Dorsolateral prefrontal cortex (tissue), 120 donors: ENCODE measurements at regions of chr20 and their contacts with region 1.

Region 1: DNA sequence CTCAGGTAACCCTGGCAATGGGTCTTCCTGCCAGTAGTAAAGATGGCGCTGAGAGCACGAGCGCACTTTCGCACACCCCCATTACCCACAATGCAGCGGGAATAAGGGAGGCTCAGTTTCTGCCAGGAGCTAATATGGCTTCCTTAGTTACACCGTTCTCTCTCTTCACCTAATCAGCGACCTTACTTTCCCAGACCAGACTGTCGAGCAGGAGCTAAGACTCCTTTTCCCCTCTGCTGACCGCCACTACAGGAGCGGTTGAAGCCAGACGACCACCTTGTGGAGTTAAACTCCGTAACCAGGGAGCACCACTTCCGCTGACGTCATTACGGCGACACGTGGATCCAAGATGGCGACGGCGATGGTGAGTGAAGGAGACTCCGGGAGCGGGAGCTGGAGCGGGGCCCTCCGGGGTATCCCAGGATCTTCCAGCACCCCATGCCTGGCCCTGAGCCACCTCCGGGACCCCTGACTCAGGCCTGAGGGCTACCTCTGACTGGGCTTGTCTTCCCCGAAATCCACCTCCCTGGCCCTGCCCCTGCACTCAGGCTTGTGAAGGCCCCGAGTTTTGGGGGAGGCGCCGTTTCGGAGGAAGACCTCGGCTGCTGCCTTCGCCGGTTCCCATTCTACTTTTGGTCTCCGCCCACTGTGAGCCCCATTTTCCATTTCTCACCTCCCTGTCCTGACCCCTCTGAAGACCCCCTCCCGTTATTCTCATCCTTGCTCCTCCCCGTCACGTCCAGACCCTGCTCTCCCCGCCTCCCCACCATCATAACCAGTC is at the start of gene TM9SF4:
- DNase-seq: peak; percentile 89 to 95 (median 92)
- H3K4me3 ChIP-seq: peak within 1 kb of the TSS; percentile 63 to 100 (median 95)
- H3K27ac ChIP-seq: peak within 1 kb of the TSS; percentile 84 to 100 (median 99)
- H3K27me3 ChIP-seq: no peaks in the 10 kb centered on the region
- CTCF ChIP-seq: peak in 30 of 56 donors; percentile 1 to 55 (median 23)
- total RNA-seq, gene TM9SF4: 45.6 to 73.7 (median 60.7) TPM

Region 2: DNA sequence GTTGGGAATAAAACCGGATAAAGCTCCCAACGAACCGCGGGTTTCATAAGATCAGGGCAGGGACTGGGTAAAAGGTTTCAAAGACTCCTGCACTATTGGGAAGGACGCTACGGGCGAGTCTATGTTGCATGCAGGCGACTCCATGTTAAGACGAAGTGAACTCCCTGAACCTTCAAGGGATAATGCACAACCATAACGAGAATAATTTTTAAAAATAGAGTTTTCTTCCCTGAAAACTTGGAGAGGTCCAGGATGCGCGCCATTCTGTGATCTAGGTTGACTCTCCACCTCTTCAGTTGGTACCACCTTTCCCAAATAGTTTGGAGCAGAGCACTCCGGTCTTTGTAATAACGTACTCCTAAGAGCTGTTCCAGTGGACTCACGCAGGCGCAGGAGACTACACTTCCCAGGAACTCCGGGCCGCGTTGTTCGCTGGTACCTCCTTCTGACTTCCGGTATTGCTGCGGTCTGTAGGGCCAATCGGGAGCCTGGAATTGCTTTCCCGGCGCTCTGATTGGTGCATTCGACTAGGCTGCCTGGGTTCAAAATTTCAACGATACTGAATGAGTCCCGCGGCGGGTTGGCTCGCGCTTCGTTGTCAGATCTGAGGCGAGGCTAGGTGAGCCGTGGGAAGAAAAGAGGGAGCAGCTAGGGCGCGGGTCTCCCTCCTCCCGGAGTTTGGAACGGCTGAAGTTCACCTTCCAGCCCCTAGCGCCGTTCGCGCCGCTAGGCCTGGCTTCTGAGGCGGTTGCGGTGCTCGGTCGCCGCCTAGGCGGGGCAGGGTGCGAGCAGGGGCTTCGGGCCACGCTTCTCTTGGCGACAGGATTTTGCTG is 370.6 kb before region 1 on chr20 and contains the start of gene TPX2:
- intact Hi-C with region 1: no loop called
- DNase-seq: peak; percentile 95 to 98 (median 97)
- H3K4me3 ChIP-seq: peak within 1 kb of the TSS; percentile 56 to 94 (median 81)
- H3K27ac ChIP-seq: peak within 1 kb of the TSS in 52 of 59 donors; percentile 11 to 87 (median 66)
- H3K27me3 ChIP-seq: no peaks in the 10 kb centered on the region
- CTCF ChIP-seq: peak in 33 of 56 donors; percentile 5 to 52 (median 27)
- total RNA-seq, gene TPX2: 1.1 to 4.1 (median 2.6) TPM

Region 3: DNA sequence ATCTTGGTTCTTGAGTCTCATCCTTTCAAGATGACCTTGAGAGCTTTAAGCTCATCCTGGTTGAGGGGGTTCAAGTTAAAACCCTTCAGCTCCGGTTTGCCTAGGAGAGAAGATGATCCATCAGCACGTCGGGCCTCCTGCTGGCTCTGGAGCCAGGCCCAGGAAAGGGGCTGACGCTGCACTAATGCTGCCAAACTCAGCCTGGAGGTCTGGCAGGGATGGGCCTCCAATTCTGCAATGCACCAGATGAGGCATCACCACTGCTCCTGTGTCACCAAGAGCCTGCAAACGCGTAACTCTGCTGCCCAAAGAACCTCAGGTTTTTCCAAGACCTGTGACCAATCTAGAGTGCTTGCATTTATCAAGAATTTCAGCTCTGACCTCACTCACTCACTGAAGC is 163.8 kb before region 1 on chr20:
- intact Hi-C with region 1: loop called in 1 of 2 experiments (anchors 5 kb)
- DNase-seq: peak in 5 of 10 donors; percentile 19 to 59 (median 46)
- H3K4me3 ChIP-seq: no peak overlapping the region
- H3K27ac ChIP-seq: peak overlapping the region in 16 of 59 donors; percentile 10 to 65 (median 32)
- H3K27me3 ChIP-seq: no peaks in the 10 kb centered on the region
- CTCF ChIP-seq: no peak

Region 4: GRCh38 chr20:32091888-32092346 is 17.7 kb before region 1 on chr20:
- intact Hi-C with region 1: loop called in 1 of 2 experiments (anchors 1 kb)
- DNase-seq: peak; percentile 71 to 91 (median 80)
- H3K4me3 ChIP-seq: peak overlapping the region in 1 of 59 donors; percentile 10
- H3K27ac ChIP-seq: no peak overlapping the region
- H3K27me3 ChIP-seq: no peaks in the 10 kb centered on the region
- CTCF ChIP-seq: peak; percentile 74 to 97 (median 90)

Region 5: DNA sequence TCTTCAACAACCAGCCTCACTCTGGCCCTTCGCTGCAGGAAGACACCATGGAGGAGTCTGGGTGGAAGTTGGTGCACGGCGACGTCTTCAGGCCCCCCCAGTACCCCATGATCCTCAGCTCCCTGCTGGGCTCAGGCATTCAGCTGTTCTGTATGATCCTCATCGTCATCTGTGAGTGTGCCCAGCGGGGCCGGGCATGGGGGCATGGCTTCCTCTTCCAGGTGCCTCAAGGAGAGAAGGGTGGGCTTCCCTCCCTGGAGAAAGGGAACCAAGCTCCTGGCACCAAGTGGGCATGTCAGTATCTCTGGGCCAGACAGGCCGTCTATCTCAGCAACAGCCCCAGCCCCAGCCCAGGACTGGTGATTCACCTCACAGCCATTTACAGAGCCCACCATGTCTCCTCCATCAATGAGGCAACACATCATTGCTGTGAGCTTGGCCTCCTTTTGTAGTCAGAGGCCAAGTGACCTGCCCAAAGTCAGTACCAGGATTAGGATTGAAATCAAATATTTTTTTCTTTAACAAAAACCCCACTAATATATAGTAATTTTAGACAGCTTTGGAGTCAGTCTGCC is 40.1 kb after region 1 on chr20:
- intact Hi-C with region 1: no loop called
- DNase-seq: no peak
- H3K4me3 ChIP-seq: no peak overlapping the region
- H3K27ac ChIP-seq: no peak overlapping the region
- H3K27me3 ChIP-seq: no peaks in the 10 kb centered on the region
- CTCF ChIP-seq: no peak

Region 6: GRCh38 chr20:32216179-32217142 is 106.9 kb after region 1 on chr20:
- intact Hi-C with region 1: no loop called
- DNase-seq: no peak
- H3K4me3 ChIP-seq: no peak overlapping the region
- H3K27ac ChIP-seq: no peak overlapping the region
- H3K27me3 ChIP-seq: no peaks in the 10 kb centered on the region
- CTCF ChIP-seq: no peak